ENCODE measurements at regions of chr2 and their contacts with region 1.

Region 1: DNA sequence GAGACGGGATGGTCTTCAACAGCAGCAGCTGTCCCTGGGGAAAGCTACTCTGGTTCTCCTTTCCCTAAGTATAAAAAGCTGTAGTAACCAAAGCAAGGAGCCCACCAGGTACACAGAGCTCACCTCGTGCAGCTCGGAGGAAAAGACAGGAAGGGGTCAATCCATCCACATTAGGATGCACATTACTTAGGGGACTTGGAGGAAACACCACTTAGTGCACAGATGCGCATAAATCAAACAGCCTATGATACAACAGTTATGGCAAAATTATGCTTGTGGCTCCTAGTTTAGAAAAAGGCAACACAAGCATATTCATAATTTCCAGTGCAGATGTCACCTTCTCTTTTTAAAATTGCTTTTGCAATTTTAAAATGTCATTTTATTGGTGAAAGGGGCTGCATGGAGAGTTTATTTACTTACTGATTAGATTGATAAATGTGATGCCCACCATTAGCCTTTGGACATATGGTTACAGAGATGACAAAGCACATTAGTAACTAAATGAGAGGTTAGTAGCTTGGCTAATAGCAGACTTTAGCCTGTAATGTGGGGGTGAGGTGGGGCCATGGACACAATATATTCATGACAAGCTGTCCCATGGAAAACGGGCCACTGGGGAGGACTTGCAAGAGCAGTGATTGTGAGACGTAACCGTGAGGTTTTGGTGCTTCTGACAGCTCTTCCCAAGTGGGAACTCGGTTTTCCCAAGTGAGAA is 199.8 kb downstream of the MYT1L start:
- H3K4me3 ChIP-seq: no peak overlapping the region
- H3K27ac ChIP-seq: no peak overlapping the region
- H3K4me1 ChIP-seq: no peaks in the 10 kb centered on the region
- CTCF ChIP-seq: no peak

Region 2: GRCh38 chr2:2116657-2117056 is 14.6 kb before region 1 on chr2:
- CTCF ChIA-PET with region 1: interaction called, 20 read pairs
- POLR2A ChIA-PET with region 1: no interaction called
- H3K4me3 ChIP-seq: no peak overlapping the region
- H3K27ac ChIP-seq: no peak overlapping the region
- H3K4me1 ChIP-seq: no peaks in the 10 kb centered on the region
- CTCF ChIP-seq: no peak